ENCODE measurements at regions of chr1 and their contacts with region 1.

Region 1: DNA sequence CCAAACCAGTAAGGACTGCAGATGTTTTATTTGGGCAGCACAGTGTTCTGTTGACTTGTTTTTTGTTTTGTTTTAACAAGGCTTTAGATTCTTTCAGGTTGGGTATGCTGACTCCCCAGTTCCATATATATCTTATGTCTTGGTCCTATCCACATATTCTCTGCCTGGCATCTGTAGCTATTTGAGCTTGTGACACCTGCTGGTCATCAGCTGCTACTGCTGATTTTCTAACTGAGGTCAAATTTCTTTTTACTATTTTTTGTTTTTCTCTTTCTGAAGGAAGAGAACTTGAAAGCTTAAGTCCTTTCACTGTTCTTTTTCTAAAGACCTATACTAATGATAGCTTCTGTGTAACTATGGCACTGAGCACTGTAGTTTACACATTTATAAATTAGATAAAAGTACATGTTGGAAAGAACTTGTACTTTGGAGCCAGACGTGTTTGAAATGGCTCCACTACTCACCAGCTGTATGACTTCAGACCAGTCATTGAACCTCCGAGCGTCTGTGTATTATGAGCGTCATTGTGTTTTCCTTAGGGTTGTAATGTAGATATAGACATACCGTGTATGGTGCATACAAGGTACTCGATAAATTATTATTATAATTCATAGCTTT is 109.4 kb downstream of the NRDC start:
- DNase-seq: peak; percentile 30
- ATAC-seq: peak; percentile 57
- H3K4me3 Mint-ChIP-seq: no peak overlapping the region
- H3K27ac Mint-ChIP-seq: no peak overlapping the region
- H3K4me1 Mint-ChIP-seq: peaks cover 12% of the 10 kb centered on the region
- H3K27me3 Mint-ChIP-seq: no peaks in the 10 kb centered on the region

Region 2: DNA sequence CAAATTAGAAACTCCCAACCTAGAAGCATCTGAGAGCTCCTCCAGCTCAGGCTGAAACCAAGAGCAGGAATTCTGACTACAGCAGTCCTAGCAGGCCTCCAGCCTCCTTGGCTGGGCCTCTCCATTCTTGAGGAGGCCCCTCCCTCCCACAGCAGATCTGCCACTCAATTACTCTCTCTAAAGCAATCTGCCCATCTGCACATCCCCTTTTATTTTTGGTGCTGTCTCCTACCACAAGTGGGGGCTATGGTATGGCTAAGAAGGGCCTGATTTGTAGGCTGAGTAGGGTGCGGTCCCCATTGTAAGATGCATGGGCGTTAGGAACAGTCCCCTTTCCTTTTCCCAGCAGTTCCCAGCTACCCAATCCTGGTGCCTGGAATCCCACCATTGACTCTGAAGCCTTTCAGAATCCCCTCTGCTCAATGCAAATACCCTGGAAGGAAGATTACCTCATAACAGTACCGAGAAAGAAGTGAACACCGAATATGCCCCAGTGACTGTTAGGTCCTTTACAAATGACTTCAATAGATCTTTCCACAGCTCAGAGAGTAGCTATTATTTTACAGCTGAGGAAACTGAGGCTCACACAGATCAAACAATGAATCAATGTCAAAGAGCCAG is 427.1 kb before region 1 on chr1:
- CTCF ChIA-PET with region 1: no interaction called
- POLR2A ChIA-PET with region 1: no interaction called
- intact Hi-C with region 1: loop called in 1 of 2 experiments (anchors 10 kb)
- DNase-seq: no peak
- ATAC-seq: no peak
- H3K4me3 Mint-ChIP-seq: no peak overlapping the region
- H3K27ac Mint-ChIP-seq: no peak overlapping the region
- H3K4me1 Mint-ChIP-seq: peaks cover 3% of the 10 kb centered on the region
- H3K27me3 Mint-ChIP-seq: peaks cover 40% of the 10 kb centered on the region

Region 3: DNA sequence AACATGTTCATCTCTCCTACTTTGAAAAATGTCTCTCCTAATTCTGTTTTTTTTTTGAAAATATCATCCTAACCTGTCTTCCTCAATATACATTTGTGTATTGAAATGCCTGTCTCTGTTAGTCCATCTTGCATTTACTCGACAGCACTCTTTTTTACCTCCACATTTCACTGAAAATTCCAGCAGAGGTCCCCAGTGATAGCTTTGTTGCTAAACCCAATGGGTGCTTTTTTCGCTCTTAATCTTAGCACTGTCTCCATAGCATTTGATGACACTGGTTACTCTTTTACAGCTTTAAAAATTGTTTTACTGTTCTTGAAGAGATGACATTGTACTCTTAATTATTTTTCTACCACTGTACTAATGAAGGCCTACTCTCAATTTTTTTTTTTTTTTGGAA is 141.4 kb before region 1 on chr1:
- CTCF ChIA-PET with region 1: interaction called, 16 read pairs
- POLR2A ChIA-PET with region 1: no interaction called
- intact Hi-C with region 1: loop called (anchors 1 to 5 kb)
- DNase-seq: peak; percentile 16
- ATAC-seq: no peak
- H3K4me3 Mint-ChIP-seq: no peak overlapping the region
- H3K27ac Mint-ChIP-seq: no peak overlapping the region
- H3K4me1 Mint-ChIP-seq: peaks cover 21% of the 10 kb centered on the region
- H3K27me3 Mint-ChIP-seq: no peaks in the 10 kb centered on the region